ENCODE measurements at regions of chr19 and their contacts with region 1.

Region 1: DNA sequence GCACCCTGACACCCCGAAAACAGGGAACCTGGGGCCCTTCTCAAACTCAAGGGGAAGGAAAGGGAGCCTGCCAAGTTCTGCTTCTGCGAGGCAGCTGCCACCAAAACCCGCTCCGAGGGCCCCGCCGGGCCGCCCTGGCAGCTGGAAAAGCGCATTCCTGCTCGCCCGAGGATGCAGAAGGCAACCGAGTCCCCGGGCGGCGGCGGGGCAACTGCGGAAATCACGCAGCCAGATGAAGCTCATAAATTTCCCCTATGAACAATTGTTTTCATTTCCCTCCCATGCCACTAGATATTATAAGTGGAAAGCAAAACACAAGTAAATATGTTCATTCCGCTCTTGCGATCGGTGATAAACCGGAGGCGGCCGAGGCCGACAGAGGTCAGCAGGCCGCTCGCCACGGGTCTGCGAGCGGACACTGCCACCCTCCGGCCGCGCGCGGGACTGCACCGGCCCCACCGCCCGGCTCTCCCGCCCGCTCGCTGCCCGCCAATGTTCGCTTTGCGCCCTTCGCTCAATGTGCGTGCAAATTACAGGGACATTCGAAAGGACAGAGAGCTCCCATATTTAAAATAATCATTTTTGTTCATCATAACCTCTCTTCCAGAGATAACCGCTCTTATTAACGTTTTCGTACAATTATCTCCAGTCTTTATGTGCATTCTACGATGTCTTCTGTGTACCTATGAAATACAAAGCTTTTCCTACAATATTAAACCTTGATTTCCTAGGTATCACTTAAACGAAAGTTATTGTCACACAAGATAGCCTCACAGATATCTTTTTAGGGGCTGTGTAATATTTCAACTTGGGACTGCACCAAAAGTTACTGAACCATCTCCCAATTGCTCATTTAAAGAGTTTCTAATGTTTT is 120.8 kb upstream of the ZNF507 start:
- DNase-seq: peak; percentile 37 to 67
- ATAC-seq: peak; percentile 83 to 92 (median 86)
- H3K4me3 ChIP-seq: peak overlapping the region in 8 of 10 donors; percentile 14 to 48 (median 34)
- H3K27ac ChIP-seq: no peak overlapping the region
- H3K4me1 ChIP-seq: peaks cover 0 to 11% (median 5%) of the 10 kb centered on the region in 9 donors
- H3K27me3 ChIP-seq: peaks cover 0 to 72% (median 57%) of the 10 kb centered on the region in 7 donors
- CTCF ChIP-seq: peak; percentile 98 to 100 (median 100)

Region 2: GRCh38 chr19:30682999-30683536 is 1541.5 kb before region 1 on chr19:
- intact Hi-C with region 1: loop called (anchors 5 kb)
- DNase-seq: peak; percentile 72 to 74
- ATAC-seq: peak in 7 of 8 donors; percentile 63 to 90 (median 81)
- H3K4me3 ChIP-seq: no peak overlapping the region
- H3K27ac ChIP-seq: no peak overlapping the region
- H3K4me1 ChIP-seq: peaks cover 0 to 14% (median 0%) of the 10 kb centered on the region in 9 donors
- H3K27me3 ChIP-seq: peaks cover 4 to 37% (median 20%) of the 10 kb centered on the region in 7 donors
- CTCF ChIP-seq: peak; percentile 85 to 95 (median 91)

Region 3: DNA sequence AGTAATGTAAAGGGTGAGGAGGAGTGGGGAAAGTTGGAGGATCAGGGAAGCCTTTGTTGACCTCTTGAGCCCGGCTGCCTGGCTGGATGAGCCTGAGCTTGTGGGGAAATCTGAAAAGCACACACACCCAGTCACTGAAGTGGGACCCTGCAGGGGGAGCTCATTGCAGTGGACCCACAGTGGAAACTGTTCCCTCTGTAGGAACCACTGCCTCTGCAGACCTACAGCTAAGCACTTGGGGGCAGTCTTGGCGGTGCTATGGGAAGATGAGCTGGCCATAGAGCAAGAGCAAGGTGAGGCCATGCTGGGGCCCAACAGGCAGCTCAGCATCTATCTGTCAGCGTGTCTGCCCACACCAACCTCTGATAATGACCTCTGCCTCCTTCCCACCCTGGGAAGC is 1170.2 kb before region 1 on chr19:
- intact Hi-C with region 1: loop called in 1 of 10 experiments (anchors 10 kb)
- DNase-seq: peak in 1 of 2 donors; percentile 14
- ATAC-seq: peak in 6 of 8 donors; percentile 46 to 76 (median 58)
- H3K4me3 ChIP-seq: no peak overlapping the region
- H3K27ac ChIP-seq: no peak overlapping the region
- H3K4me1 ChIP-seq: no peaks in the 10 kb centered on the region
- H3K27me3 ChIP-seq: peaks cover 0 to 8% (median 0%) of the 10 kb centered on the region in 7 donors
- CTCF ChIP-seq: peak in 7 of 9 donors; percentile 35 to 65 (median 45)

Region 4: GRCh38 chr19:31676271-31677004 is 548.2 kb before region 1 on chr19:
- intact Hi-C with region 1: loop called in 5 of 10 experiments (anchors 2 to 10 kb)
- DNase-seq: no peak
- ATAC-seq: peak in 1 of 8 donors; percentile 52
- H3K4me3 ChIP-seq: no peak overlapping the region
- H3K27ac ChIP-seq: no peak overlapping the region
- H3K4me1 ChIP-seq: no peaks in the 10 kb centered on the region
- H3K27me3 ChIP-seq: peaks cover 0 to 17% (median 0%) of the 10 kb centered on the region in 7 donors
- CTCF ChIP-seq: peak in 7 of 9 donors; percentile 20 to 48 (median 39)

Region 5: DNA sequence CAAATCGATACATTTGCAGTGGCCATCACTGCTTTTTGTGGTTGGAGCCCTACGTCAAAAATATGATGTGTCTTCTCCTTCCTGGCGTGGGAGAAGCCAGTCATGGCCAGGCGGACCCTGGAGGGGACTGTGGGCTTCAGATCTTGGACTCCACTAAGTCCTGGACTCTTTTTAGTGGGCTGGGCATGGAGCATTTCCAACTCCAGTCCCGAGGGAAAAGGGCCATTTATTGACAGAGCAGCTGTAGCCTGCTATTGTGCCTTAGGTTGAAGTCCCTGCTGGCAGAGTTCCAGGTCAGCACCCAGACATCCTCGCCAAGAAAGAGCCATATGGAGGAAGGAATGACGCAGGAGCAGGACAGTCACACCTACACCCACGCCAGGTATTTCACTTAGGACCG is 58.4 kb before region 1 on chr19:
- intact Hi-C with region 1: no loop called
- DNase-seq: no peak
- ATAC-seq: no peak
- H3K4me3 ChIP-seq: no peak overlapping the region
- H3K27ac ChIP-seq: no peak overlapping the region
- H3K4me1 ChIP-seq: no peaks in the 10 kb centered on the region
- H3K27me3 ChIP-seq: peaks cover 0 to 45% (median 31%) of the 10 kb centered on the region in 7 donors
- CTCF ChIP-seq: no peak